Prostate gland (tissue), 2 donors: ENCODE measurements at regions of chr4 and their contacts with region 1.

Region 1: GRCh38 chr4:102826890-102827673 is at the start of gene UBE2D3:
- DNase-seq: peak; percentile 87
- H3K4me3 ChIP-seq: peak within 1 kb of the TSS; percentile 92 to 97
- H3K27ac ChIP-seq: peak within 1 kb of the TSS; percentile 100
- H3K4me1 ChIP-seq: no peaks in the 10 kb centered on the region
- H3K27me3 ChIP-seq: no peaks in the 10 kb centered on the region
- CTCF ChIP-seq: peak in 1 of 4 experiments; percentile 15
- POLR2A ChIP-seq: peak; percentile 46
- total RNA-seq, gene UBE2D3: 318 to 370 TPM

Region 2: DNA sequence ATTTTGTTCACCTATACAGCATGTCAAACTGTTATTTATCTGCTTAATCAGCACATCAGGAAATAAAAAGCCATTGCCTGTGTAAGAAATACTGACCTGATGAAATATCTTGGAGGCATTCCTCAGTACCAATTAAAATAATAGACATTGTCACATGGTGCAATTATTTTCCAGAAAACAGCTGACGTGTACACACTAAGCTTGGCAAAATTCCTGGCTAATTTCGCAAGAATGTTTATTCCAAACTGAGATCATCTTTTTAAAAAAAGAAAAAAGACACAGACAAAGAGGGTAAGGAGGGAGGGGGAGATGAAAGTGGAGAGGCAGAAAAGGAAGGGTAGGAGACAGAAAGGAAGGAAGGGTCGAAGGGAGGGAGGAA is 387.9 kb before region 1 on chr4:
- intact Hi-C with region 1: loop called (anchors 10 kb)
- DNase-seq: peak; percentile 44
- H3K4me3 ChIP-seq: no peak overlapping the region
- H3K27ac ChIP-seq: no peak overlapping the region
- H3K4me1 ChIP-seq: no peaks in the 10 kb centered on the region
- H3K27me3 ChIP-seq: no peaks in the 10 kb centered on the region
- CTCF ChIP-seq: no peak
- POLR2A ChIP-seq: no peak

Region 3: GRCh38 chr4:102620697-102621497 is 206.2 kb before region 1 on chr4:
- intact Hi-C with region 1: loop called (anchors 5 kb)
- DNase-seq: no peak
- H3K4me3 ChIP-seq: no peak overlapping the region
- H3K27ac ChIP-seq: no peak overlapping the region
- H3K4me1 ChIP-seq: no peaks in the 10 kb centered on the region
- H3K27me3 ChIP-seq: no peaks in the 10 kb centered on the region
- CTCF ChIP-seq: peak in 3 of 4 experiments; percentile 47 to 77 (median 70)
- POLR2A ChIP-seq: no peak

Region 4: GRCh38 chr4:102868781-102869568 is 41.9 kb after region 1 on chr4 and contains the start of gene CISD2:
- intact Hi-C with region 1: loop called (anchors 1 kb)
- DNase-seq: peak; percentile 91
- H3K4me3 ChIP-seq: peak within 1 kb of the TSS; percentile 62 to 67
- H3K27ac ChIP-seq: peak within 1 kb of the TSS; percentile 89 to 99
- H3K4me1 ChIP-seq: no peaks in the 10 kb centered on the region
- H3K27me3 ChIP-seq: no peaks in the 10 kb centered on the region
- CTCF ChIP-seq: peak in 1 of 4 experiments; percentile 26
- POLR2A ChIP-seq: peak; percentile 72
- total RNA-seq, gene CISD2: 4.2 to 16.4 TPM

Region 5: GRCh38 chr4:103099691-103100392 is 272.8 kb after region 1 on chr4 and contains the start of gene BDH2:
- intact Hi-C with region 1: loop called (anchors 5 kb)
- DNase-seq: peak; percentile 76
- H3K4me3 ChIP-seq: peak within 1 kb of the TSS; percentile 32 to 33
- H3K27ac ChIP-seq: peak within 1 kb of the TSS; percentile 55 to 63
- H3K4me1 ChIP-seq: no peaks in the 10 kb centered on the region
- H3K27me3 ChIP-seq: no peaks in the 10 kb centered on the region
- CTCF ChIP-seq: peak; percentile 52 to 92 (median 88)
- POLR2A ChIP-seq: peak; percentile 54
- total RNA-seq, gene BDH2: 41.5 to 54.1 TPM